Activated naive CD4-positive, alpha-beta T cell treated with anti-CD3 and anti-CD28 coated beads for 36 hours (primary cell): ENCODE measurements at regions of chr3 and their contacts with region 1.

Region 1: DNA sequence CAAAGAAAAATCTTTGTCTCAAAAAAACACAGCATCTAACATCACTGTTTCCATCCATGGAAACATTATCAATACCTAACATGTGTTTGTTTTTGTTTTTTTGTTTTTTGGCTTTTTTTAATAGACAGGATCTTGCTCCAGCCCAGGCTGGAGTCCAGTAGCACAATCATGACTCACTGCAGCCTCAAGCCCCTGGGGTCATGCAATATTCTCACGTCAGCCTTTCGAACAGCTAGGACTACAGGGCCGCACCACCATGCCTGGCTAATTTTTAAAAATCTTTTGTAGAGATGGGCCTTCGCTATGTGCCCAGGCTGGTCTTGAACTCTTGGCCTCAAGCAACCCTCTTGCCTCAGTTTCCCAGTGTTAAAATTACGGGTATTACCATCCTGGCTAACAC is 52.8 kb downstream of the RAF1 start:
- DNase-seq: no peak
- H3K4me3 Mint-ChIP-seq: no peak overlapping the region
- H3K27ac Mint-ChIP-seq: no peak overlapping the region
- H3K4me1 Mint-ChIP-seq: peaks cover 45% of the 10 kb centered on the region
- H3K27me3 Mint-ChIP-seq: no peaks in the 10 kb centered on the region

Region 2: GRCh38 chr3:12556671-12557472 is 54.2 kb before region 1 on chr3 and contains the start of gene MKRN2:
- CTCF ChIA-PET with region 1: interaction called, 3 read pairs
- intact Hi-C with region 1: loop called (anchors 1 kb)
- DNase-seq: peak; percentile 83
- H3K4me3 Mint-ChIP-seq: peak within 1 kb of the TSS; percentile 78
- H3K27ac Mint-ChIP-seq: peak within 1 kb of the TSS; percentile 88
- H3K4me1 Mint-ChIP-seq: peaks cover 48% of the 10 kb centered on the region
- H3K27me3 Mint-ChIP-seq: peaks cover 24% of the 10 kb centered on the region
- total RNA-seq, gene MKRN2: 32.9 to 34.5 TPM

Region 3: DNA sequence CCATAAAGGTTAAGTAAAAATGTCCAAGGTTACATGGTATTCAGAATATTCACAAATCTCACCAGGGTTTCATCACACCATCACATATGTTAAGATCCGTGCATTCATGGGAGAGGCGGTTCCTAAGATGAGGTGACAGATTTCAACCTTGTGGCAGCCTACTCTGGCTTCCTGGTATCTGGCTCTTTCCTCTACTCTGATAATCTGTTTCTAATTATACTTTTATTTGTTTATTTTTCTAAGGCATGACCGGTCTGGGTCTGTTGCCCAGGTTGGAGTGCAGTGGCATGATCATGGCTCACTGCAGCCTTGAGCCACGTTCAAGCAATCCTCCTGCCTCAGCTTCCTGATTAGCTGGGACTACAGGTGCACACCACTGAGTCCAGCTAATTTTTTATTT is 18.4 kb after region 1 on chr3:
- CTCF ChIA-PET with region 1: interaction called, 4 read pairs
- intact Hi-C with region 1: loop called (anchors 1 kb)
- DNase-seq: no peak
- H3K4me3 Mint-ChIP-seq: no peak overlapping the region
- H3K27ac Mint-ChIP-seq: no peak overlapping the region
- H3K4me1 Mint-ChIP-seq: peaks cover 56% of the 10 kb centered on the region
- H3K27me3 Mint-ChIP-seq: no peaks in the 10 kb centered on the region